ENCODE measurements at regions of chr6 and their contacts with region 1.

Region 1: DNA sequence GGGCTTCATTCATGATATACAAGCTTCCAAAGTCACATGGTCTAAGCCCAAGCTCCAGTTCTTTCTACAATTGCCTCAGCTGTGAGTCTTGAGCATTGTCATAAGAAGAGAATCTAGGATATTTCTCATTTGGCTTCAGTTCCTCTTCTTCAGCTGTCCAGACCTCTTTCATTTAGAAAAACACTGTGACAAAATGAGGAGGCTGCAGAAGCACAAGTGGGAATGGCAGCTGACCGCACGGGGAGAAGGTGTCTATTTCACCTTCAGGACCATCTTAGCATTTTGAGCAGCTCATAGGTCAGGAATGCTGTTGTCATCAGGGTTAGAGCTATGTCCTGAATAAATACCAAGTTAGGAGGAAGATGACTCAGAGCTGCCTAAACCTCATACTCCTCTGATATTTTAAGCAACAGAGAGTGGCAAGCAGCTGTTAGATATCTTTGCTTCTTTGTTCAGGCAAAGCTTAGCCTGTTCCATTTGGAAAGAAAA is 390.1 kb upstream of the CITED2 start:
- DNase-seq: peak; percentile 91
- H3K4me3 ChIP-seq: no peak overlapping the region
- H3K27ac ChIP-seq: peak overlapping the region; percentile 96
- H3K4me1 ChIP-seq: peaks cover 42% of the 10 kb centered on the region
- H3K27me3 ChIP-seq: no peaks in the 10 kb centered on the region
- CTCF ChIP-seq: no peak
- POLR2A ChIP-seq: peak; percentile 63

Region 2: GRCh38 chr6:139539852-139540251 is 224.7 kb before region 1 on chr6:
- CTCF ChIA-PET with region 1: no interaction called
- POLR2A ChIA-PET with region 1: no interaction called
- dilution Hi-C with region 1: no loop called
- intact Hi-C with region 1: loop called (anchors 1 kb)
- DNase-seq: peak; percentile 13
- H3K4me3 ChIP-seq: no peak overlapping the region
- H3K27ac ChIP-seq: peak overlapping the region; percentile 24
- H3K4me1 ChIP-seq: peaks cover 29% of the 10 kb centered on the region
- H3K27me3 ChIP-seq: no peaks in the 10 kb centered on the region
- CTCF ChIP-seq: no peak
- POLR2A ChIP-seq: no peak

Region 3: GRCh38 chr6:139588076-139588639 is 176.4 kb before region 1 on chr6:
- CTCF ChIA-PET with region 1: no interaction called
- POLR2A ChIA-PET with region 1: no interaction called
- dilution Hi-C with region 1: no loop called
- intact Hi-C with region 1: loop called (anchors 2 kb)
- DNase-seq: peak; percentile 67
- H3K4me3 ChIP-seq: no peak overlapping the region
- H3K27ac ChIP-seq: peak overlapping the region; percentile 34
- H3K4me1 ChIP-seq: peaks cover 22% of the 10 kb centered on the region
- H3K27me3 ChIP-seq: no peaks in the 10 kb centered on the region
- CTCF ChIP-seq: no peak
- POLR2A ChIP-seq: no peak

Region 4: GRCh38 chr6:139820210-139820609 is 55.7 kb after region 1 on chr6:
- CTCF ChIA-PET with region 1: no interaction called
- POLR2A ChIA-PET with region 1: no interaction called
- dilution Hi-C with region 1: no loop called
- intact Hi-C with region 1: loop called (anchors 1 kb)
- DNase-seq: peak; percentile 92
- H3K4me3 ChIP-seq: no peak overlapping the region
- H3K27ac ChIP-seq: peak overlapping the region; percentile 90
- H3K4me1 ChIP-seq: peaks cover 26% of the 10 kb centered on the region
- H3K27me3 ChIP-seq: no peaks in the 10 kb centered on the region
- CTCF ChIP-seq: no peak
- POLR2A ChIP-seq: no peak

Region 5: DNA sequence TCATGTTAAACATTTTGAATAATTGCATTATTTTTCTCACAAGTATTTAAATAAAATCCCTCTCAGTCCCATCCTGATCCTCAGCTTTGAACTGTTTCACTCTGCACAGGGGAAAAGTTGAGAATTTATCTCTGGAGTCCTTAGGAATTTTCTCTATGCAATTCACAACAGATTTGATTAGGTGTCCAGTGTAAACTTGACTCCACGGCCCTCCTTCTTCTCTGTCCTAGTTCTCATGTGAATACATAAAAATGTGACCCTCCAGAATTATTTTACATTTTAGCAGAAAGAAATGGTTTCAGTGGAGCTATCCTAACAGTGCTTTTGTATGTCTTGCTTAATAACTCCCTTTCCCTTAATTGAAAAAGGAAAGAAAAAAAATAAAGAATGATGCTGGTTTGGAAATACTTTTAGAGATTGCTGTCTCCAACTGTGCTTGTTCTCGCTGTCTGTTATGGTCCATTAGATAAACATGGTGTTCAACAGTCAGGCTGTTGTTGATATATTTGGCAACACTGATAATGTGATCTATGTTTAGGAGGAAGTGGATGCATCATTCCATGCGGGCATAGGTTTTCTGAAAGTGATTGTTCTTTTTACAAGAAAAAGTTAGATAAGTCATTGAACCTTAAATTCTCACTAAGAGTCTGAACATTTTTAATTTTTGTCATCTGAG is 209.3 kb after region 1 on chr6:
- CTCF ChIA-PET with region 1: no interaction called
- POLR2A ChIA-PET with region 1: no interaction called
- dilution Hi-C with region 1: no loop called
- intact Hi-C with region 1: loop called (anchors 2 kb)
- DNase-seq: peak; percentile 90
- H3K4me3 ChIP-seq: no peak overlapping the region
- H3K27ac ChIP-seq: peak overlapping the region; percentile 49
- H3K4me1 ChIP-seq: peaks cover 12% of the 10 kb centered on the region
- H3K27me3 ChIP-seq: no peaks in the 10 kb centered on the region
- CTCF ChIP-seq: no peak
- POLR2A ChIP-seq: no peak

Region 6: GRCh38 chr6:140393665-140394540 is 629.4 kb after region 1 on chr6:
- CTCF ChIA-PET with region 1: no interaction called
- POLR2A ChIA-PET with region 1: no interaction called
- dilution Hi-C with region 1: no loop called
- intact Hi-C with region 1: loop called (anchors 5 kb)
- DNase-seq: peak; percentile 93
- H3K4me3 ChIP-seq: no peak overlapping the region
- H3K27ac ChIP-seq: peak overlapping the region; percentile 30
- H3K4me1 ChIP-seq: peaks cover 14% of the 10 kb centered on the region
- H3K27me3 ChIP-seq: no peaks in the 10 kb centered on the region
- CTCF ChIP-seq: no peak
- POLR2A ChIP-seq: no peak

Region 7: GRCh38 chr6:140940251-140940925 is 1175.8 kb after region 1 on chr6:
- CTCF ChIA-PET with region 1: no interaction called
- POLR2A ChIA-PET with region 1: no interaction called
- dilution Hi-C with region 1: no loop called
- intact Hi-C with region 1: no loop called
- DNase-seq: no peak
- H3K4me3 ChIP-seq: no peak overlapping the region
- H3K27ac ChIP-seq: no peak overlapping the region
- H3K4me1 ChIP-seq: no peaks in the 10 kb centered on the region
- H3K27me3 ChIP-seq: no peaks in the 10 kb centered on the region
- CTCF ChIP-seq: no peak
- POLR2A ChIP-seq: no peak

Measured in endothelial cell of umbilical vein (primary cell).